Heart left ventricle (tissue), 16 donors: ENCODE measurements at regions of chr5 and their contacts with region 1.

Region 1: DNA sequence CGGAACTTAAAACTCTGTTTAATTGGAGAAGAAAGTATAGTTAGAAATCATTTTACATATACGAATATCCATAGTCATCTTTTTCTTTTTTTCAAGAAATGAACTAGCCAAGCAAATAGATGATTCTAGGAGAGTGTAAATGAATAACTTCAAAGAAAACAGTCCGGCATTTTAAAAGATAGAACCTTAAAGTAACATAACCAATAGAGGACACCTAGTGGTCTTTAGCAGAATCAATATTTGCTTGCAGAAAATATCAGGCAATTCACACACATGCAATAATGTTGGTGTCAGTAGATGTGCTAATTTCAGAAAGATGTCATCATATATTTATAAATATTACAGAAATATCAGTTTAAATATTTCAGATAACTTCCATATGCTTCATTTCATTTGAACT is 57.1 kb downstream of the HCN1 start:
- DNase-seq: no peak
- ATAC-seq: no peak
- H3K4me3 ChIP-seq: no peak overlapping the region
- H3K27ac ChIP-seq: no peak overlapping the region
- H3K4me1 ChIP-seq: no peaks in the 10 kb centered on the region
- H3K27me3 ChIP-seq: no peaks in the 10 kb centered on the region
- CTCF ChIP-seq: peak in 7 of 12 donors; percentile 14 to 38 (median 31)
- POLR2A ChIP-seq: no peak

Region 2: DNA sequence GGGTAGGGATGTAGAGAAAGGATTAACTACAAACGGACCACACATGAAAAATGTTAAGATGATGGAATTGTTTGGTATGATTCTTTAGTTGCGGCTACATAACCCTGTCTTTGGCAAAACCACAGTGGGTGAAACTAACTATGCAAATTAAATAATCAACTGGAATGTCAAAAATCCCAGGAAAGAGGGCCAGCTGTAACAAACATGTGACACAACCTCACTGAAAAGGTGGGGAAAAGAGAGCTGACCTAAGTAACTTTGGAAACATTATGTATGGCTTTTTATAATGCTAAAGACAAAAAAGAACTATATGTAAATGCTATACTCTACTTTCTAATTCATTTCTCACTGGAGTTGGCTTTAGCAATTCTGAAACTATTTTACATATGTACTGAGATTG is 578.3 kb before region 1 on chr5:
- intact Hi-C with region 1: loop called in 1 of 10 experiments (anchors 10 kb)
- DNase-seq: no peak
- ATAC-seq: no peak
- H3K4me3 ChIP-seq: no peak overlapping the region
- H3K27ac ChIP-seq: no peak overlapping the region
- H3K4me1 ChIP-seq: no peaks in the 10 kb centered on the region
- H3K27me3 ChIP-seq: no peaks in the 10 kb centered on the region
- CTCF ChIP-seq: no peak
- POLR2A ChIP-seq: no peak

Region 3: GRCh38 chr5:45454090-45454489 is 184.9 kb before region 1 on chr5:
- intact Hi-C with region 1: no loop called
- DNase-seq: peak in 4 of 5 donors; percentile 18 to 33 (median 28)
- ATAC-seq: peak; percentile 69 to 97 (median 95)
- H3K4me3 ChIP-seq: no peak overlapping the region
- H3K27ac ChIP-seq: no peak overlapping the region
- H3K4me1 ChIP-seq: no peaks in the 10 kb centered on the region
- H3K27me3 ChIP-seq: no peaks in the 10 kb centered on the region
- CTCF ChIP-seq: no peak
- POLR2A ChIP-seq: no peak

Region 4: GRCh38 chr5:45532826-45533624 is 106.0 kb before region 1 on chr5:
- intact Hi-C with region 1: loop called in 1 of 10 experiments (anchors 10 kb)
- DNase-seq: peak in 3 of 5 donors; percentile 20 to 34 (median 28)
- ATAC-seq: peak; percentile 80 to 93 (median 90)
- H3K4me3 ChIP-seq: no peak overlapping the region
- H3K27ac ChIP-seq: peak overlapping the region in 3 of 12 donors; percentile 2 to 23 (median 19)
- H3K4me1 ChIP-seq: peaks cover 0 to 11% (median 0%) of the 10 kb centered on the region in 12 donors
- H3K27me3 ChIP-seq: no peaks in the 10 kb centered on the region
- CTCF ChIP-seq: no peak
- POLR2A ChIP-seq: no peak